ENCODE measurements at regions of chr11 and their contacts with region 1.

Region 1: GRCh38 chr11:124793466-124794278 is 6.5 kb downstream of the MSANTD2 start:
- DNase-seq: peak; percentile 38
- ATAC-seq: peak; percentile 72
- H3K4me3 Mint-ChIP-seq: no peak overlapping the region
- H3K27ac Mint-ChIP-seq: no peak overlapping the region
- H3K4me1 Mint-ChIP-seq: peaks cover 47% of the 10 kb centered on the region
- H3K27me3 Mint-ChIP-seq: no peaks in the 10 kb centered on the region

Region 2: GRCh38 chr11:124778281-124778680 is 15.4 kb before region 1 on chr11:
- CTCF ChIA-PET with region 1: interaction called, 15 read pairs
- POLR2A ChIA-PET with region 1: no interaction called
- intact Hi-C with region 1: no loop called
- DNase-seq: no peak
- ATAC-seq: no peak
- H3K4me3 Mint-ChIP-seq: no peak overlapping the region
- H3K27ac Mint-ChIP-seq: no peak overlapping the region
- H3K4me1 Mint-ChIP-seq: peaks cover 15% of the 10 kb centered on the region
- H3K27me3 Mint-ChIP-seq: no peaks in the 10 kb centered on the region

Region 3: GRCh38 chr11:125164422-125165110 is 370.9 kb after region 1 on chr11 and contains the start of gene PKNOX2:
- CTCF ChIA-PET with region 1: no interaction called
- POLR2A ChIA-PET with region 1: no interaction called
- intact Hi-C with region 1: no loop called
- DNase-seq: peak; percentile 83
- ATAC-seq: peak; percentile 85
- H3K4me3 Mint-ChIP-seq: peak within 1 kb of the TSS; percentile 77
- H3K27ac Mint-ChIP-seq: peak within 1 kb of the TSS; percentile 51
- H3K4me1 Mint-ChIP-seq: peaks cover 18% of the 10 kb centered on the region
- H3K27me3 Mint-ChIP-seq: peaks cover 53% of the 10 kb centered on the region
- total RNA-seq, gene PKNOX2: not detected